Posterior cingulate gyrus (tissue), 11 donors: ENCODE measurements at regions of chr11 and their contacts with region 1.

Region 1: DNA sequence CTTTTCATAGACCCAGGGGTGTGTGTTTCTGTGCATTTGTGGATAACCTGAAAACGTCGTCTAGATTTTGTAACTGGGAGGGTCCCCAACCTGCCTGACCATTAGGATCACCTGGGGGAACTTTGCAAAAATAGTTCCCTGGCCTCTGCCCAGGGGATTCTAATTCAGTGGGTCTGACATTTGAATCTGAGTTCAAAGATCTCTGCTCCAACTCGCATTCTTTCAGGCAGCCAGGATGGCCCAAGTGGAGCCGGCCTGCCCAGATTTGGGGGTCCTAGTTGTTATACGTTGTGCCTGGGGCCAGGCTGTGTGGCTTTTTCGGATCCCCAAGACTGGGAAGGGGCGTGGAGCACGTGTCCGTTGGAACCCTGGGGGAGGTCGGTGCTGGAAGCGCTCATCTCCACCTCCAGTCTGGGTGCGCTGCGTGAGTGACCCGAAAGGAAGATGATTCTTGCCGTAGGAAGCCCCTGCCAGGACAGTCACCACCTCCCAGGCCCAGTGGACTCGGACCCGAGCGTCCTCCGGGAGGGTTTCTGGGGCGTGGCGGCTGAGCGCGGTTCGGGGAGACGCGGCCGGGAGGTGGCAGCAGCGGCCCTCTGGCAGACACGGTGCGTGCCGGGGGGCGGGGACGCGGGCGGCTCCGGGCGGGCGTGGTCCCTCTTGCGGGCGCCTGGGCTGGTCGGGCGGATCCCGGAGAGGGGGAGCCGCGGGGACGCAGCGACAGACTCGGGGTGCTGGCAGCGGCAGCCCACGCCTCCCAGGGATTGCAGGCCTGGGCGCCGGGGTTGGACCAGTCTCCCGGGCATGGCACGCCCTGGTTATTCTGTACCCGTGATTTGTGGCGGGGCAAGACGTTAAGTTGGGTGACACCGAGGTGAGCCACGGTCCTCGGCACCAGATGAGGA is 29.2 kb upstream of the PLET1 start:
- DNase-seq: peak; percentile 66 to 98 (median 82)

Region 2: DNA sequence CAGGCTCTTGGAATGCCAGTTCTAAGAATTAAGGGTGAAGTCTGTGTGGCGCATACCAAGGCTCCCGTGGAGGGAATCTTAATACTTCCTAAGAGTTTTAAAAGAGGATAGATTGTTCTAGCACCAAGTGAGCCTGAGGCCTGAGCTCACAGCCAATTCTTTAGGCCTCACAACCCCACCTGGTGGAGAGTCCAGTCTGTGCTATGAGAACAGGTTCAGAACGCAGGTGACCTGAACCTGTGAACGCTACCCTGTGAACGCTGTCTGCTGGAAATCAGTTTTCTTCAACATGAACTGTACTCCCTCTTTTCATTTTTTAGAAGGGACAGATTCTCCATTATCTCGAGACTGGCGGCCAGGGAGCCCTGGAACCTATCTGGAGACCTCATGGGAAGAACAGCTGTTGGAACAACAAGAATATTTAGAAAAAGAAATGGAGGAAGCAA is 307.8 kb before region 1 on chr11:
- intact Hi-C with region 1: no loop called
- DNase-seq: peak in 8 of 10 donors; percentile 45 to 92 (median 53)

Region 3: DNA sequence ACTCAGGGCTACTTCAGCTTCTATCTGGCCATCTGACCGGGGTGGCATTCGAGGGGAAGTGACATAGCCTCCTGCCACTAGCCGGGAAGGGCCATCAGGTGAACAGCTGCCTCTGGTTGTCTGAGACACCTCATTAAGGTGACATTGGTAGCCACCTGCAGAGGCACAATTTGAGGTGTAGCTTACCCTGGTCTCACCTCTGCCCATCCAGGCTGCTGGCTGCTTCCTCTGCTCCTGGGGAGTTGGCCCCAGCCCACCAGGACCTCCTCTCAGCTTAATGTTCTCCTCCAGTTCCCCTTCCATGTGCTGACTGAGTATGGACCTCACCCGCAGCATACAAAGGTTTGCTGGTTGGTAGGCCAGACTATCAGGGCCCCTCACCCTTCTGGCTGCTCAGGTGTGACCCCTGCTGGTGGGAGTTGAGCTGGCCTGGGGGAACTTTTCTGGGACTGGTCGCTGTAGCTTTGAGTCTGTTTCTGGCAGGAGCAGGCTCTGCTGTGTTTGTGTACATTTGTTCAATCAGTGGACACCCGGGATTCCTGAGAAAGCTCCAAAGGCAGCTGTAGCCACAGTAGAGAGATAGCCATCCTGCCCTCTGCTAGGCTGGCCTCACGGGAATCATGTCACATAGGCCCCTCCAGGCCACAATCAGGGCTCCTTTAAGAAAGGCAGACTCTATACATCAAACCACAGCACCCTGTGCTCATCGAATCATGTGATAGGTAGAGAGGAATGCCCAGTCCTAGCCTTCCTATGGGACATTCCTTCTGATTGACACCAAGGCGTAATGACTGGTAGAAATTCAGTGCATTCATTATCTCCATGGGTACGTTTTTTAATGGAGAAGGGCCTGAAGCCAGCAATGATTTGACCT is 265.9 kb after region 1 on chr11:
- intact Hi-C with region 1: loop called (anchors 5 kb)
- DNase-seq: peak in 9 of 10 donors; percentile 33 to 93 (median 64)

Region 4: DNA sequence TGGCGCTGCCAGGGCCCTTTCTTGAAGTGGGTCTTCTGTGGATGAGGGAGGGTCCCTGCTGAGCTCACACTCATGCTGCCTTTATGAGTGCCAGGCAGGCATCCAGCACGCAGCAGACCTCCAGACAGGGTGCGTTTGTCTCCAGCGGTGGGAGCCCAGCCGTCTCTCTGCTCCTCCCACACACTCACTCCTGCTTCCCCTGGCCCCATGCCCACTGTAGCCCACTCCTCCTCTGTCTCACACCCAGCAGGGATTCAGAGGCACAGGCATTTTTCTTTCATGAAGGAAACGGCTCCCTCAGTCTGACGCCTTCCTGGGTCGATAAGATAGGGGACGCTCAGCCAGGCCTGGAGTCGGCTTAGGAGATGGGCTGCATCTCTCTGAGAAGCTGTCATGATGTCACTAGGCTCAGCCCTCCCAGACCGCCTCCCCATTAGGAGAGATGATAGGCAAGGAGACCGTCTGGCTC is 487.5 kb after region 1 on chr11:
- intact Hi-C with region 1: loop called (anchors 10 kb)
- DNase-seq: no peak

Region 5: GRCh38 chr11:113289431-113290187 is 999.8 kb after region 1 on chr11:
- intact Hi-C with region 1: loop called (anchors 2 kb)
- DNase-seq: peak; percentile 49 to 96 (median 75)